HepG2 (cell line): ENCODE measurements at regions of chr2 and their contacts with region 1.

Region 1: GRCh38 chr2:75466708-75467311 is 93.9 kb downstream of the EVA1A start:
- DNase-seq: peak; percentile 39
- ATAC-seq: peak; percentile 58
- H3K4me3 ChIP-seq: no peak overlapping the region
- H3K27ac ChIP-seq: no peak overlapping the region
- H3K4me1 ChIP-seq: peaks cover 28% of the 10 kb centered on the region
- H3K27me3 ChIP-seq: no peaks in the 10 kb centered on the region
- CTCF ChIP-seq: peak; percentile 61
- EP300 ChIP-seq: no peak
- POLR2A ChIP-seq: no peak
- RAD21 ChIP-seq: no peak; the same call in 1 of the 2 replicates

Region 2: DNA sequence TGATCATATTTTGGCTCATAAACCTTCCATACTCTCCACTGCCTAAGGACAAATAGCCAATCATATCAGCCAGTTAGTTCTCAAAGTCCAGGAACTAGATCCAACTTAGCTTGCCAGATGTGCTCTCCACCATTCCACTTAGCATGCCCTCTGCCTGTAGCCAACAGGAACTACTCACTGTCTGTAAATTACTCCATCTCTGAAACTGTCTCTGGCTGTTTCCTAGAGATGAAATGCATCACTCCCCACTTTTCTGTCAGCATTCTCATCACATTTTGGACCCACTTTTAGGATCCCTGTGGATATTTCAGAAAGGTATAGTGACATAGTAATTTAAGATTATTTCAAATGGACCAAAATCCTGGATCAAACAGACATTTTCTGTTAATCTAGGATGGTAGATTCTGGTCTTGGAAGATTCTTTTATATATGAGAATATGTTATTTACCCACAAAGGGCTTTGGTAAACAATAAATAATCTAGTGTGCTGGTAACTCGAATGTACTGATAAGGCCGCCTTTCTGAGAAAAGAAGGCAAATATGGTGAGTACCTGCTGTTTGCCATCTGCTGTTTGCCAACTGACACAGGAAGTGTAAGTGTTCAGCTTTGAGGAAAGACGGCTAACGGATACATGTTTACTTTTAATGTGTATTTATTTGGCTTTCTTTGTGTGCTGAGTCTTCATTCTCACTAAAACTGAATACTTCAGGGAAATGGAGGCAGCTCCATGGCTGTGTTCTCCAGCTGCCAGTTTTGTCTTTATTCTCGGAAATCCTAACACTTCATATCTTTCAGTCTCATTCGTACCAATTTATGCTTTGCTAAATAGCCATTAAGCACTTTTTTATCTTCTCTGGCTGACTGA is 14.4 kb after region 1 on chr2:
- CTCF ChIA-PET with region 1: interaction called, 12 read pairs
- POLR2A ChIA-PET with region 1: no interaction called
- in situ Hi-C with region 1: no loop called
- intact Hi-C with region 1: loop called (anchors 1 kb)
- DNase-seq: peak; percentile 88
- ATAC-seq: peak; percentile 95
- H3K4me3 ChIP-seq: peak overlapping the region in 1 of 3 experiments; percentile 29; a peak in 1 of 6 replicates
- H3K27ac ChIP-seq: peak overlapping the region; percentile 69
- H3K4me1 ChIP-seq: peaks cover 52% of the 10 kb centered on the region
- H3K27me3 ChIP-seq: no peaks in the 10 kb centered on the region
- CTCF ChIP-seq: peak; percentile 76
- EP300 ChIP-seq: peak in 1 of 2 experiments; percentile 98; a peak in 2 of 4 replicates
- POLR2A ChIP-seq: 0 out of 4 replicates have a peak, but pooled peaks of 1 of the 2 experiments have one; percentile 12
- RAD21 ChIP-seq: 0 out of 2 replicates have a peak, but pooled peaks have one; percentile 16

Region 3: DNA sequence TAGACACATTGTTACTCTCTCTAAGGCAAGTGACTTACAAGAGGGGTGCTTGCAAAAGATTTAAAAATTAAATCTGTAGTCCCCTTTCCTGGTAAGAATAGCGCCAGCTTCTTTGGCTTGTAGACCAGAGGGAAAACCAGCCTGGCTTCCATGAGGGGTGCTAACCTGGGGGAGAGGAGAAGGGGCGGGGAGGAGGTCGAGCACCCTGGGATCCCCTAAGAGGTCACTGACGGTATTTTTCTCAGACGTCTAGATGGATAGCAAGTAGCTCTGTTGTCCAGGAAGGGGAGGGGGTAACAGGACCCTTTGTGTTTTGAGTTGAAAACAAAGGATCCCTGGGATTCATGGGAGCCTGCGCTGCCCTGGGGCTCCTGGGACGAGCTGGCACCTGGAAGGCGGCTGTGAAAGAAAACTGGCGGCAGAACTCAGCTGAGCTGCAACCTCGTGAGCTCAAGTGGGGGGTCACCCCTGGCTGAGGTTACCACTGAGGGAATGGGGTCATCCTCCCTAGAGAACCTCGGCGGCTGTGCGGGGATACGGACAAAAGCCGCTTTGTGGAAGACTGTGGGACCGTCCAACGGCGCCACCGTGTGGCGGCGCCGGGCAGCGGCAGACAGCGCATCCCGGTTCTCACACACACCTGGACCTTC is 142.0 kb after region 1 on chr2:
- CTCF ChIA-PET with region 1: interaction called, 144 read pairs
- POLR2A ChIA-PET with region 1: interaction called, 3 read pairs
- in situ Hi-C with region 1: loop called (anchors 5 kb)
- intact Hi-C with region 1: loop called (anchors 1 kb)
- DNase-seq: peak; percentile 79
- ATAC-seq: peak; percentile 95
- H3K4me3 ChIP-seq: peak overlapping the region; percentile 28 to 65 (median 28); a peak in 5 of 6 replicates
- H3K27ac ChIP-seq: peak overlapping the region; percentile 8
- H3K4me1 ChIP-seq: peaks cover 66% of the 10 kb centered on the region
- H3K27me3 ChIP-seq: no peaks in the 10 kb centered on the region; a peak in 1 of 5 replicates
- CTCF ChIP-seq: peak; percentile 99
- EP300 ChIP-seq: peak in 1 of 2 experiments; percentile 33; a peak in 1 of 4 replicates
- POLR2A ChIP-seq: no peak
- RAD21 ChIP-seq: peak; percentile 99

Region 4: DNA sequence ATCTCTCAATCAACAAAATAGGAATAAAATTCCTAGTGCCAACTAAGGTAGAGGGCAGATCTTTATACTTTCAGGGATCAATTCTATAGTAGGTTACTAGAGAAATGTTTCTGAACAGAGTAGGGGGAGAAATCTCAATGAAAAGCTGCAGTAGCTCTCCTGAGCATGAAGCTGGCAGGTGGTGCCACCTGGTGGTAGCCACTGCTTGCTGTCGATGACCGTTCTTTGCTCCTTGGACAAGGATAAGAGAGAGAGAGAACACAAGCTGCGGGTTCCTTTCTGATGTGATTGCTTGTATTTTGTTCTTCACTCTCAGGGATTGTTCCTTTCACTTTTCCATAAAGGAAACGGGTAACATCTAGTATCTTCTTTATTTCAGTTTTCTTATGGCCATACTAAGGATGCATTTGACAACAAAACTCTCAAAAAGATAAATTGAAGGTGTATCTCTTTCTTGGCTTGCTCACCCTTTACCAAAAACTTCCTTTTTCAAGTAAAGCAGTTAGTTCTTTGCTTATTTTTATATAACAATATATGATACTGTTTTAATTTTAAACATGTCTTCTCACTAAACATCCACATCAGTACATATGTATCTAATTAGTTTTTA is 161.2 kb after region 1 on chr2:
- CTCF ChIA-PET with region 1: interaction called, 92 read pairs
- POLR2A ChIA-PET with region 1: interaction called, 7 read pairs
- in situ Hi-C with region 1: no loop called
- intact Hi-C with region 1: loop called (anchors 1 kb)
- DNase-seq: peak; percentile 75
- ATAC-seq: peak; percentile 96
- H3K4me3 ChIP-seq: no peak overlapping the region
- H3K27ac ChIP-seq: no peak overlapping the region
- H3K4me1 ChIP-seq: no peaks in the 10 kb centered on the region
- H3K27me3 ChIP-seq: peaks cover 0 to 26% of the 10 kb centered on the region in 2 experiments; a peak in 2 of 5 replicates
- CTCF ChIP-seq: peak; percentile 96
- EP300 ChIP-seq: no peak
- POLR2A ChIP-seq: no peak
- RAD21 ChIP-seq: peak; percentile 91